Endothelial cell of umbilical vein (primary cell): ENCODE measurements at regions of chr11 and their contacts with region 1.

Region 1: DNA sequence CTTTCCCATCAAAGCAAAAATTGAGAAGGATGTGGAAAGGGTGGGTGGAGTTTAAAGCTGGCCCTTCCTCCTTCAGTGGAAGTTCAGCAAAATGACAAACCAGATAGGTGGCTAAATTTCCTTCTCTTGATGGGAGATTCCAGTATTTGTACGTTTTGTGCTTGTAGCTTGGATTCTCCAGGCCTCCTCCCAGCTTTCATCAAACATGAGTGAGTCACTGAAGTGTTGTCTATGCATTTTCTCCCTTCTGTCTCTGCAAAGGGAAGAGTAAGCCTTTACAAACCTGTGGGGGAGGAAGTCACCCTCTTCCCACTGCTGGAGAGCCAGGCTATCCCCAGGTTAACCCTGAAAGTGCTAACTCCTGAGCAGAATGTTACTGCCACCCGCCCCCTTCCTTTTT is 6.4 kb downstream of the MARK2 start:
- DNase-seq: no peak
- H3K4me3 ChIP-seq: no peak overlapping the region
- H3K27ac ChIP-seq: no peak overlapping the region
- H3K4me1 ChIP-seq: peaks cover 14% of the 10 kb centered on the region
- H3K27me3 ChIP-seq: no peaks in the 10 kb centered on the region
- CTCF ChIP-seq: no peak
- POLR2A ChIP-seq: no peak

Region 2: GRCh38 chr11:63859011-63859550 is 13.8 kb after region 1 on chr11:
- CTCF ChIA-PET with region 1: interaction called, 4 read pairs
- POLR2A ChIA-PET with region 1: interaction called, 6 read pairs
- dilution Hi-C with region 1: no loop called
- intact Hi-C with region 1: loop called (anchors 2 kb)
- DNase-seq: no peak
- H3K4me3 ChIP-seq: no peak overlapping the region
- H3K27ac ChIP-seq: peak overlapping the region; percentile 28
- H3K4me1 ChIP-seq: peaks cover 11% of the 10 kb centered on the region
- H3K27me3 ChIP-seq: no peaks in the 10 kb centered on the region
- CTCF ChIP-seq: no peak
- POLR2A ChIP-seq: no peak